Esophagus muscularis mucosa (tissue), 4 donors: ENCODE measurements at regions of chr12 and their contacts with region 1.

Region 1: GRCh38 chr12:128783129-128783574 is 40.6 kb downstream of the SLC15A4 start:
- DNase-seq: no peak
- H3K4me3 ChIP-seq: no peak overlapping the region
- H3K27ac ChIP-seq: no peak overlapping the region
- H3K4me1 ChIP-seq: no peaks in the 10 kb centered on the region
- H3K27me3 ChIP-seq: no peaks in the 10 kb centered on the region
- CTCF ChIP-seq: no peak
- EP300 ChIP-seq: no peak
- POLR2A ChIP-seq: no peak

Region 2: GRCh38 chr12:129911428-129912049 is 1128.4 kb after region 1 on chr12:
- intact Hi-C with region 1: loop called (anchors 5 kb)
- DNase-seq: no peak
- H3K4me3 ChIP-seq: no peak overlapping the region
- H3K27ac ChIP-seq: no peak overlapping the region
- H3K4me1 ChIP-seq: no peaks in the 10 kb centered on the region
- H3K27me3 ChIP-seq: peaks cover 0 to 58% (median 0%) of the 10 kb centered on the region in 4 donors
- CTCF ChIP-seq: peak; percentile 36 to 53 (median 38)
- EP300 ChIP-seq: no peak
- POLR2A ChIP-seq: no peak